ENCODE measurements at regions of chr17 and their contacts with region 1.

Region 1: DNA sequence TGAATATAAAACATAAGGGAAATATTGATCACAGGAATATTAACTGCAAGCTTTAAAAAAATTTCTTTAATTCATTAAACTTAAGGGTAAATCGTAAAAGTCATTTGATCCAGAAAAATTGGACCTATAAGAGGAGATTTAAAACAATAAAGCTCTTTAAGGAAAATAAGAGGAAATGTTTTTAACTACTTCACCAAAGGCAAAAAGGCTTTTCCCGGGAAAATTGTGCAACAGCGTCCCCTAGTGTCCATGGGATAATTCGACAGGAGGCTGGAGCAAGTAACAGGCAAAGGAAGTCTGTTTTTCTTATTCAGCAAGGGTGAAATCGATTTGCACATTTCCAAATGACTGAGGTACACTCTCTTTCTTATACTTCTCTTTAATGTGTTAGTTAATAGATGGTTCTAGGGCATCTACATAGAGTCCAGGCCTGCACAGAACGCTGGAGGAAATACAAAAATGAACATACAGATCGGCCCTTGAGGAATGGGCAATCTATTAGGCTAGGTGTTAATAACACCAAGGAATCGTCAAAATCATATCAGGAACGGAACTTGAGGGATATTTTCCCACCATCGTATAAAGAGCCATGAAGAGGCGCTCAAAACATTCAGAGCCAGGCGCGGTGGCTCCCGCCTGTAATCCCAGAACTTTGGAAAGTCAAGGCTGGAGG is 61.4 kb downstream of the ZNF18 start:
- DNase-seq: peak; percentile 57
- ATAC-seq: no peak
- H3K4me3 Mint-ChIP-seq: no peak overlapping the region
- H3K27ac Mint-ChIP-seq: no peak overlapping the region
- H3K4me1 Mint-ChIP-seq: no peaks in the 10 kb centered on the region
- H3K27me3 Mint-ChIP-seq: no peaks in the 10 kb centered on the region

Region 2: GRCh38 chr17:11644261-11645212 is 291.3 kb before region 1 on chr17:
- CTCF ChIA-PET with region 1: no interaction called
- POLR2A ChIA-PET with region 1: no interaction called
- intact Hi-C with region 1: loop called in 1 of 2 experiments (anchors 10 kb)
- DNase-seq: peak; percentile 64
- ATAC-seq: peak; percentile 42
- H3K4me3 Mint-ChIP-seq: no peak overlapping the region
- H3K27ac Mint-ChIP-seq: no peak overlapping the region
- H3K4me1 Mint-ChIP-seq: no peaks in the 10 kb centered on the region
- H3K27me3 Mint-ChIP-seq: no peaks in the 10 kb centered on the region